PC-3 (cell line): ENCODE measurements at regions of chr19 and their contacts with region 1.

Region 1: GRCh38 chr19:2475702-2476450 is at the start of gene GADD45B:
- DNase-seq: peak; percentile 95
- ATAC-seq: peak; percentile 27
- H3K4me3 ChIP-seq: peak within 1 kb of the TSS; percentile 100
- H3K27ac ChIP-seq: peak within 1 kb of the TSS; percentile 64
- H3K4me1 ChIP-seq: peaks cover 5% of the 10 kb centered on the region; the same call in 1 of the 2 replicates
- H3K27me3 ChIP-seq: no peaks in the 10 kb centered on the region
- CTCF ChIP-seq: no peak
- total RNA-seq, gene GADD45B: 137 and 154 TPM in 2 replicates

Region 2: GRCh38 chr19:2429917-2430798 is 45.7 kb before region 1 on chr19:
- CTCF ChIA-PET with region 1: no interaction called
- POLR2A ChIA-PET with region 1: no interaction called
- intact Hi-C with region 1: no loop called
- DNase-seq: no peak
- ATAC-seq: no peak
- H3K4me3 ChIP-seq: no peak overlapping the region
- H3K27ac ChIP-seq: no peak overlapping the region
- H3K4me1 ChIP-seq: peaks cover 12% of the 10 kb centered on the region; the same call in 1 of the 2 replicates
- H3K27me3 ChIP-seq: no peaks in the 10 kb centered on the region
- CTCF ChIP-seq: no peak

Region 3: DNA sequence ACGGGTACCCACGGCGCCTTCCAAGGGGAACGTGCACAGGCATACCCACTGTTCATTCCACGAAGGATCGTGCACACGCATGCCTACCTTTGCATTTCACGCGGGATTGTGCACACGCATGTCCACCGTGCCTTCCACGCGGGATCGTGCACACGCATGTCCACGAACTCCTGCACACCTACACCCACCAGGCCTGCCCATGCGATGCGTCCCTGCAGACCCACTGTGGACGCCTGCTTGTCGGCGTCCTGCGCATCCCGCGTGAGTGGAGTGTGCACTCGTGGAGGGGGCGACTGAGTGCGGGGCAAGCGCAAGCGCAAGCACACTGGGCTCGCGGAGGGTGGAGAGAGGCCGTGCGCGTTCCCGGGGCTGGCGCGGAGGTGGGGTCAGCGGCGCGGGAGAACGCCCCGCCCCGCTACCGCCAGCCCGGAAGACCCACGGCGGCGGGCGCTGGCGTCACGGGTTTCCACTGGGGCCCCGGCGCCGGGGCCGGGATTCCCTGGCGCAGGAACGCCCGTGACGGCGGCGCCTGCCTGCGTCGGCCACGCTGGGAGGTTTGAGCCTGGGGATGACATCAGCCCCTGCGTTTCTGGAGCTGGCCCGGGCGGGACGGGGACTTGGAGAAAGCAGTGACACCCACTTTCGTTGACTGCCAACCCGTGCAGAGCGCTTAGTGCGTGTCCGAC is 18.7 kb after region 1 on chr19:
- CTCF ChIA-PET with region 1: interaction called, 10 read pairs
- POLR2A ChIA-PET with region 1: interaction called, 8 read pairs
- intact Hi-C with region 1: no loop called
- DNase-seq: peak; percentile 61
- ATAC-seq: peak; percentile 45
- H3K4me3 ChIP-seq: peak overlapping the region; percentile 98
- H3K27ac ChIP-seq: peak overlapping the region; percentile 92
- H3K4me1 ChIP-seq: peaks cover 46% of the 10 kb centered on the region
- H3K27me3 ChIP-seq: no peaks in the 10 kb centered on the region
- CTCF ChIP-seq: no peak

Region 4: GRCh38 chr19:2552859-2553258 is 77.0 kb after region 1 on chr19:
- CTCF ChIA-PET with region 1: no interaction called
- POLR2A ChIA-PET with region 1: interaction called, 13 read pairs
- intact Hi-C with region 1: no loop called
- DNase-seq: peak; percentile 61
- ATAC-seq: peak; percentile 55
- H3K4me3 ChIP-seq: peak overlapping the region; percentile 67
- H3K27ac ChIP-seq: peak overlapping the region; percentile 6
- H3K4me1 ChIP-seq: peaks cover 27% of the 10 kb centered on the region
- H3K27me3 ChIP-seq: no peaks in the 10 kb centered on the region
- CTCF ChIP-seq: no peak

Region 5: DNA sequence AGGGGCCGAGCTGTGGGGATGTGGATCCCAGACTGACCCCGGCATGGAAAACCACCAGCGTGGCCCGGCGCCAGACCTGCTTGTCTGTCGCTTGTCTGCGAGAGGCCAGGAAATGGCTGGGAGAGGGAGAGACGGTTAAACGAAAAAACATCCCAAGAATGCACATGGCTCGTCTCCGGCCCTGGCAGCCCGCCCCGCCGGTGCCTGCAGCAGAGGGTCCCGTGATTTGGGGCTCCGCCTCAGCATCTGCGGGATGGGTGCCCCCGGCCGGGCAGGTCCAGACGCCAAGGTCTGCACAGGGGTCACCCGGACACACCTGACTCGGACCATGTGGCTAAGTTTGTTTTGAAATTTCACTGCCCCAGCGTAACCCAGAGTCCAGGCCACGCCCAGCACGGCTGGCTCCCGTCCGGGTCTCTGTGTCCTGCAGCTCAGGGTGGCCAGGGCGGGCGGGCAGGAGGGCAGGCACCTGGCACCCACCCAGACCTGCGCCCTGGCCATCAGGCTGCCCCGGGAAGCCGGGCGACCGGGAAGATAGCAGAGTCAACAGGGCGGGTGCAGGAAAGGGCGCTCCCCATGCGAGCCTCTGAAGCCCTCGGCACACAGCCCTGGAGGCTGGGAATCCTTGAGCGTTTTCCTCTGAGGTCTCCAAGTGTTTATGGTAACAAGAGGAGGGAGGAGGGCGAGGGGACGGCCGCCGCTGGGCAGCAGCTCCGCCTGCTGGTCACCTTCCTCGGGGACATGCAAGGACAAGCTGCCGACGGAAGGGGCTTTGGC is 103.2 kb after region 1 on chr19:
- CTCF ChIA-PET with region 1: interaction called, 6 read pairs
- POLR2A ChIA-PET with region 1: interaction called, 19 read pairs
- intact Hi-C with region 1: loop called (anchors 1 kb)
- DNase-seq: peak; percentile 87
- ATAC-seq: peak; percentile 86
- H3K4me3 ChIP-seq: peak overlapping the region; percentile 70
- H3K27ac ChIP-seq: peak overlapping the region; percentile 57
- H3K4me1 ChIP-seq: peaks cover 22% of the 10 kb centered on the region
- H3K27me3 ChIP-seq: no peaks in the 10 kb centered on the region
- CTCF ChIP-seq: peak; percentile 84

Region 6: GRCh38 chr19:2627319-2627829 is 151.5 kb after region 1 on chr19:
- CTCF ChIA-PET with region 1: interaction called, 5 read pairs
- POLR2A ChIA-PET with region 1: interaction called, 18 read pairs
- intact Hi-C with region 1: no loop called
- DNase-seq: peak; percentile 96
- ATAC-seq: peak; percentile 98
- H3K4me3 ChIP-seq: no peak overlapping the region
- H3K27ac ChIP-seq: peak overlapping the region; percentile 92
- H3K4me1 ChIP-seq: peaks cover 16% of the 10 kb centered on the region
- H3K27me3 ChIP-seq: no peaks in the 10 kb centered on the region
- CTCF ChIP-seq: no peak

Region 7: GRCh38 chr19:2691951-2692350 is 216.1 kb after region 1 on chr19:
- CTCF ChIA-PET with region 1: no interaction called
- POLR2A ChIA-PET with region 1: no interaction called
- intact Hi-C with region 1: no loop called
- DNase-seq: no peak
- ATAC-seq: no peak
- H3K4me3 ChIP-seq: no peak overlapping the region
- H3K27ac ChIP-seq: no peak overlapping the region
- H3K4me1 ChIP-seq: no peaks in the 10 kb centered on the region
- H3K27me3 ChIP-seq: no peaks in the 10 kb centered on the region
- CTCF ChIP-seq: no peak

Region 8: GRCh38 chr19:3102228-3103140 is 626.6 kb after region 1 on chr19:
- CTCF ChIA-PET with region 1: no interaction called
- POLR2A ChIA-PET with region 1: interaction called, 10 read pairs
- intact Hi-C with region 1: no loop called
- DNase-seq: no peak
- ATAC-seq: no peak
- H3K4me3 ChIP-seq: no peak overlapping the region
- H3K27ac ChIP-seq: no peak overlapping the region
- H3K4me1 ChIP-seq: no peaks in the 10 kb centered on the region
- H3K27me3 ChIP-seq: no peaks in the 10 kb centered on the region
- CTCF ChIP-seq: no peak